ENCODE measurements at regions of chr7 and their contacts with region 1.

Region 1: GRCh38 chr7:142632291-142633134 is 116.8 kb upstream of the PRSS1 start:
- DNase-seq: no peak
- H3K4me3 ChIP-seq: no peak overlapping the region
- CTCF ChIP-seq: peak; percentile 65

Region 2: DNA sequence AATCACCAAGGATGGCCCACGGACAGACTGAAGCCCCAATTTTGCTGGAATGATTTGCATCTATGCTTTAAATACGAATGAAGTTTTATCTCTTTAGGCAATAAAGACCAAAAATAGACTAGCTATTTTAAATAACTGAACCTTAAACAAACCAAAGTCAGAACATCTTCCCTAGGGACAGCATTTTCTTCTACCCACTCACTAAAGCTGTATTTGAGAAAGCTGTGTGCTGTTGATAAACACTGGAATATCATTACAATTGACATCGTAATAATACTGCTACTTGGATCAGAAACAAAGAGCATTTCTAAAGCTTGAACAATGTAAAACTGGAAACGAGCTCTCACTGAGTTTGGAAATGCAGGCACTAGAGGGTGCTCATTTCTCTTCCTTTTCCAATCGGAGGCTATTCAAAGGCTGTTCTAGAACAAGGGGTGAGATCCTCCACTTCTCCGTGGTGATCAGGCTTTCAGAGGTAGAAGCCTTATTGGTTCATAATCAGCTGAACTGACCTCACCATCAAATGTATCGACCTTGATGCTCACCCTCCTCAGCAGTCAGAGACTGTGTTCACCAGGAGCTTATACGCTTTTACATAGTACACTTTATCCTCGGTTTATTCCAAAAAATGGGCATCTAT is 108.6 kb before region 1 on chr7:
- CTCF ChIA-PET with region 1: interaction called, 23 read pairs
- POLR2A ChIA-PET with region 1: no interaction called
- DNase-seq: no peak
- H3K4me3 ChIP-seq: no peak overlapping the region
- CTCF ChIP-seq: no peak

Region 3: GRCh38 chr7:142603870-142604448 is 28.6 kb before region 1 on chr7:
- CTCF ChIA-PET with region 1: interaction called, 34 read pairs
- POLR2A ChIA-PET with region 1: no interaction called
- DNase-seq: no peak
- H3K4me3 ChIP-seq: no peak overlapping the region; the same call in 1 of the 2 replicates
- CTCF ChIP-seq: peak; percentile 70

Region 4: GRCh38 chr7:142612237-142612881 is 20.2 kb before region 1 on chr7:
- CTCF ChIA-PET with region 1: interaction called, 21 read pairs
- POLR2A ChIA-PET with region 1: no interaction called
- DNase-seq: no peak
- H3K4me3 ChIP-seq: no peak overlapping the region
- CTCF ChIP-seq: no peak

Region 5: DNA sequence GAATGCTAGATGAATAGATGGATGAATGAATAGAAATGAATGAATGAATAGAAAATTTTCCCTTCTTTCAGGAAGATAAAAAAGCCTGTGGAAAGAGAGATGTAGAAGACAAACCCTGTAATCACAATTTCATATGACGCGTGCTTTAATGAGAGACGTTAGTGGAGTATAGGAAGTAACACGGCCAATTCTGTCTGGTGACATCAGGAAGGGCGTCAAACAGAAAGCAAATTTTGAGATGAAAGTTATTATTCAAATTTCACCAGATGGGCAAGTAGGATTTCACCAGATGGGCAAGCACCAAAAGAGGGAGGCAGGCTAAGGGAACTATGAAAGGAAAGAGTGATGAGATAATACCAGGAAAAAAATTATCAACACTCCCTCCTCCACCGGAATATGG is 12.1 kb before region 1 on chr7:
- CTCF ChIA-PET with region 1: interaction called, 21 read pairs
- POLR2A ChIA-PET with region 1: no interaction called
- DNase-seq: no peak
- H3K4me3 ChIP-seq: no peak overlapping the region
- CTCF ChIP-seq: no peak

Region 6: DNA sequence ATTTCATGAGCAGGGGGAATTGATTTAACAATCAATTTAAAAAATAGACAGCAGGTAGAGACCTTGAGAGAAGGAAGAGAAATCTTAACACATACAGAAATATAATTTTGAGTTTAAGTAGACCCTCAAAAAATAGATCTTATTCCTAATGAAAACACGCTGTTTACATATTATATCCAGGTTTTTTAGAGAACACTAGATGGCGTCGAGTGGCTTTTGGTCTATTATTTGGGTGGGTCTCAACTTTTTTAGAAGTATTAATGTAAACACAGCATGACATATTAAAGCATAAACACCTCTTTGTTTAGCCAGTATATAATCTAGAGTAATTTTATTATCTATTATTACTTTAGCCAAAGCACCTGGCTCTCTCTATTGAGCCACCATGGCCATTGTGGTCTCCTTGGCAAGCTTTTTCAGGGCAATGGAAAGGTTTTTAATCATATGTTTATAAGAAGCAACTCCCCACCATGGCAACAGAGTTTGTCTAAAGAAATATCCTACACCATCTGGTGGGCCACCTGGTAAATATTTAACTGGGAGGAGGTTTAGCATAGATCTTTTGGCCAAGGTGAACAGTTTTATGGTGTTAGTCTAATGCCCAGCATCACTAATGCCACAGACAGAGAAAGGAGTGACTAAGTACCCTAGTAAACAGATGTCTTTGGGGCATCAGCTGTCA is 57.1 kb after region 1 on chr7:
- CTCF ChIA-PET with region 1: no interaction called
- POLR2A ChIA-PET with region 1: no interaction called
- DNase-seq: no peak
- H3K4me3 ChIP-seq: no peak overlapping the region
- CTCF ChIP-seq: no peak

Measured in AG04449 (cell line).